BJ (cell line): ENCODE measurements at regions of chr20 and their contacts with region 1.

Region 1: DNA sequence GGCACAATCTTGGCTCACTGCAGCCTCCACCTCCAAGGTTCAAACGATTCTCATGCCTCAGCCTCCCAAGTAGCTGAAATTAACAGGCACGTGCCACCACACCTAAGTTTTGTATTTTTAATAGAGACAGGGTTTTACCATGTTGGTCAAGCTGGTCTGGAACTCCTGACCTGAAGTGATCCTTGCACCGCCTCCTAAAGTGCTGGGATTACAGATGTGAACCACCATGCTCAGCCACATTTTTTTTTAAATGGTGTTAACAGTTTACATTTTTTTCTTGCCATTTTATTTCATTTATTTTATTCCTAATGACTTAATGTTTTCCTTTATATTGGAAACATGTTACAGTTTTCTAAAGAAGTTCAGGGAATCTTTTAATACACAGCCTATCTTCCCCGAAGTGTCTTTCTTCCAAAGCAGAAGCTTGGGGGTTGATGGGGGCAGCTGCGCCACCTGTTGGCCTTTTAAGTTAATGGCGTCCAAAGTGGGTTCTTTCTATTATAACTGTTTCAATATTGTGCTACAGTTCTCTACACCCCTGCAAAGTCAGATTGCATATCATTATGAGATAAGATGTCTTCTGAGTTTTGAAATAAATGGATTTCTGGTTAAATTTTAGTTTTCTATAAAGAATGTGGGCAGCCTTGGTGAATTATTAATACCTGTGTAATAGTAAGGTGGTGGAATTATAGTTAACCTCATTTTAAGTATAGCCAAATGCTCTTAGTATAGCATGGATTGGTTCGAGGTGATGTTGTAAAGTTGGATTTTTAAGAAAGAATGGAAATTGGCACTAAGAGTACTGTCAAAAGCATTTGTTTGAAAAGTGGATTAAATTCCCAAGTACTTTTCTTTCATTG is 42.0 kb upstream of the PLCG1 start:
- DNase-seq: no peak
- H3K4me3 ChIP-seq: no peak overlapping the region
- H3K27me3 ChIP-seq: no peaks in the 10 kb centered on the region
- CTCF ChIP-seq: peak; percentile 85

Region 2: GRCh38 chr20:40962730-40963504 is 132.4 kb before region 1 on chr20:
- CTCF ChIA-PET with region 1: interaction called, 17 read pairs
- POLR2A ChIA-PET with region 1: no interaction called
- DNase-seq: no peak
- H3K4me3 ChIP-seq: no peak overlapping the region
- H3K27me3 ChIP-seq: no peaks in the 10 kb centered on the region; the same call in 1 of the 2 replicates
- CTCF ChIP-seq: peak; percentile 84

Region 3: GRCh38 chr20:40970201-40970600 is 125.1 kb before region 1 on chr20:
- CTCF ChIA-PET with region 1: interaction called, 16 read pairs
- POLR2A ChIA-PET with region 1: no interaction called
- DNase-seq: no peak
- H3K4me3 ChIP-seq: no peak overlapping the region
- H3K27me3 ChIP-seq: no peaks in the 10 kb centered on the region
- CTCF ChIP-seq: peak; percentile 31

Region 4: DNA sequence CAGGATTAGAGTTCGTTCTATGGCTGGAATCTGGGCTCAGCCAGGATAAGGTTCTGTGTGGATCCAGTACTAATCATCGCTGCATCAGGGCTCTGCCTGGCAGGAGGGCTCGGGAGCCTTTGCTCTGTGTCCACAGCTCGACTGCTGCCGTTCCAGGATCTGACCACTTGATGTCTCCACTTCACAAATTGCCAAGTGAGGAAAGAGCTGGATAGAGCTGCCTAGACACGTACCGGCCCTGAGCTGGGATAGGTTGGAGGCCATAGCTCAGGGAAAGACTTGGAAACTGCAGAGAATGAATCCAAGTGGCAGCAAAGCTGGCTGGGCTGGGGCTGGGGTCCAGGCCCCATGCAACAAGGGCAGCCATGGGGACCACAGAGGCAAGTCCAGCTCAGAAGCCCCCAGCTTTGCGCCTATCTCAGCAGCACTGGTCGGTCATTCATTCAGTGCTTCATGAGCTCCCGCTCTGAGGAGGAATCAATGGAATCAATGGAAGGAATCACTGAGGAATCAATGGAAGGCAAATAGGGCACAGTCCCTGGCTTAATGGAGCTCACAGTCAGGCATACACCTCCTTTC is 104.7 kb before region 1 on chr20:
- CTCF ChIA-PET with region 1: interaction called, 74 read pairs
- POLR2A ChIA-PET with region 1: no interaction called
- DNase-seq: no peak
- H3K4me3 ChIP-seq: no peak overlapping the region
- H3K27me3 ChIP-seq: no peaks in the 10 kb centered on the region
- CTCF ChIP-seq: peak; percentile 92

Region 5: GRCh38 chr20:41078329-41078728 is 17.0 kb before region 1 on chr20:
- CTCF ChIA-PET with region 1: interaction called, 19 read pairs
- POLR2A ChIA-PET with region 1: no interaction called
- DNase-seq: peak; percentile 36
- H3K4me3 ChIP-seq: no peak overlapping the region
- H3K27me3 ChIP-seq: no peaks in the 10 kb centered on the region
- CTCF ChIP-seq: peak; percentile 68